ENCODE measurements at regions of chr17 and their contacts with region 1.

Region 1: DNA sequence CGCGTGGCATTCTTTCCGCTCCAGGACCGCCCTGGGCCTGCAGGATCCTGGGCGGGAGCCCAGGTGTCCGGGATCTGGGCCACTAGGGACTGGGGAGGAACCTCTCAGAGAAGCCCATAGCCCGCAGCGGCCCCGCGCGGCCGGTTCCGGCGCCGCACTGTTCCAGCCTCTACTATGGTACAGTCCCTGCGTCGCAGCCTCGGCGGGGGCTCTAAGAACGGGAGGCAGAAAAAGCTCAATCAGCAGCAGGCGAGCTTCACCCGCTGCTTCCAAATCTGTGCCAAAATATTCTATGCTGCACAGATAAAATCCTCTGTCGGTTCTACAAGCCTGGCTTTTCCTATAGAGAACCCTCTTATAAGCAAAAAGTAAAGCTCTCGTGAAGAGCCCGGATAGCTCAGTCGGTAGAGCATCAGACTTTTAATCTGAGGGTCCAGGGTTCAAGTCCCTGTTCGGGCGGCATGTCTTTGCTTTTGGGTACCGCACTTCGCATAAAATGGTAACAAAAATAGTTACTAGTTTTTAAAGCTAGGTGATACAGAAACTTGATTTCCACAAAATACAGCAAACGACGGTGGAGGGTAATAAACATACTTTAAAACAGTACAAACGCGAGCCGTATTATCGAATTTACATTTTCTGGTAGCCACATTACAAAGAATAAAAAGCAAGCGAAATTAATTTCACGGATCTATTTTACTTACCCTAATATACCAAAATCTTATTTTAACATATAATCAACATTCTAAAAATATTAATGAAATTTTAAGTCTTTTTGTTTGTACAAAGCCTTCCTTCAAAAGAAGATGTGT is 661 bp upstream of the ALOXE3 start:
- DNase-seq: peak; percentile 90
- H3K4me3 Mint-ChIP-seq: peak overlapping the region; percentile 83
- H3K27ac Mint-ChIP-seq: peak overlapping the region; percentile 91
- H3K4me1 Mint-ChIP-seq: peaks cover 48% of the 10 kb centered on the region
- H3K27me3 Mint-ChIP-seq: peaks cover 56% of the 10 kb centered on the region

Region 2: GRCh38 chr17:6775871-6776405 is 1343.0 kb before region 1 on chr17 and contains the start of gene FBXO39:
- CTCF ChIA-PET with region 1: no interaction called
- POLR2A ChIA-PET with region 1: no interaction called
- intact Hi-C with region 1: no loop called
- DNase-seq: no peak
- H3K4me3 Mint-ChIP-seq: no peak within 1 kb of the TSS
- H3K27ac Mint-ChIP-seq: no peak within 1 kb of the TSS
- H3K4me1 Mint-ChIP-seq: no peaks in the 10 kb centered on the region
- H3K27me3 Mint-ChIP-seq: peaks cover 20% of the 10 kb centered on the region
- total RNA-seq, gene FBXO39: not detected

Region 3: GRCh38 chr17:7844292-7845154 is 274.5 kb before region 1 on chr17:
- CTCF ChIA-PET with region 1: no interaction called
- POLR2A ChIA-PET with region 1: no interaction called
- intact Hi-C with region 1: loop called (anchors 5 kb)
- DNase-seq: peak; percentile 92
- H3K4me3 Mint-ChIP-seq: peak overlapping the region; percentile 85
- H3K27ac Mint-ChIP-seq: peak overlapping the region; percentile 95
- H3K4me1 Mint-ChIP-seq: peaks cover 45% of the 10 kb centered on the region
- H3K27me3 Mint-ChIP-seq: no peaks in the 10 kb centered on the region

Region 4: GRCh38 chr17:8041249-8041928 is 77.6 kb before region 1 on chr17:
- CTCF ChIA-PET with region 1: no interaction called
- POLR2A ChIA-PET with region 1: no interaction called
- intact Hi-C with region 1: no loop called
- DNase-seq: peak; percentile 62
- H3K4me3 Mint-ChIP-seq: no peak overlapping the region
- H3K27ac Mint-ChIP-seq: no peak overlapping the region
- H3K4me1 Mint-ChIP-seq: no peaks in the 10 kb centered on the region
- H3K27me3 Mint-ChIP-seq: peaks cover 22% of the 10 kb centered on the region

Region 5: GRCh38 chr17:8057691-8058114 is 61.3 kb before region 1 on chr17:
- CTCF ChIA-PET with region 1: interaction called, 120 read pairs
- POLR2A ChIA-PET with region 1: no interaction called
- intact Hi-C with region 1: loop called (anchors 2 kb)
- DNase-seq: peak; percentile 46
- H3K4me3 Mint-ChIP-seq: no peak overlapping the region
- H3K27ac Mint-ChIP-seq: no peak overlapping the region
- H3K4me1 Mint-ChIP-seq: peaks cover 12% of the 10 kb centered on the region
- H3K27me3 Mint-ChIP-seq: peaks cover 42% of the 10 kb centered on the region

Region 6: DNA sequence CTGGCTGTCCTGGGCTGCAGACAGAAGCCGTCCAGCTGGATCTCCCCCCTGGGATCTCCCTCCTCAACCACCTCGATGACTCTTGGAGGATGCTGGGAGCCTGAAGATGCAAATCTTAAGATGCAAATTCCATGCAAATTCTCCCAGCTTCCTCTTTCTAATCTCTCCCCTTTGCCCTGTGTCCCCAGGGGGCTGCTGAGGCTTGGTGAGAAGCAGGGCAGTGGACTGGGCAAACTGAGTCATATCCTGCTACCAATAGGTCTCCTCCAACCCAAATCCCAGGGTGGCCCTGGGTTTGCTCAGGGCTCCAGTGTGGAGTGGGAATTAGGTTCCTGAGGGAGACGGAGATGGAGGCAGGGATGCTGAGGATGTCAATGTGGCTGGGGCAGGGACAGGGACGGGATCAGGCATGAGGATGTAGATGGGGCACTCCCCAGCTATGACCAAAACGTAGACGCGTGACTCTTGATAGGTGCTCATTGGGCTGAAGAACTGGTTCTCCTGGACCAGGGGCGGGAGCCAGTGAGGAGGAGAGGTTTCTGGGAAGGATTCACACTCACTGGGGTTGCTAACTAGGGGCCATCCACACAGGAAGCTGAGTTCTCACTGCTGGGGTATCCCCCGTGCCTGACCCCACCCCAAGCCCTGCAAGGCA is 27.8 kb before region 1 on chr17:
- CTCF ChIA-PET with region 1: interaction called, 92 read pairs
- POLR2A ChIA-PET with region 1: no interaction called
- intact Hi-C with region 1: no loop called
- DNase-seq: no peak
- H3K4me3 Mint-ChIP-seq: no peak overlapping the region
- H3K27ac Mint-ChIP-seq: no peak overlapping the region
- H3K4me1 Mint-ChIP-seq: peaks cover 10% of the 10 kb centered on the region
- H3K27me3 Mint-ChIP-seq: peaks cover 24% of the 10 kb centered on the region

Region 7: DNA sequence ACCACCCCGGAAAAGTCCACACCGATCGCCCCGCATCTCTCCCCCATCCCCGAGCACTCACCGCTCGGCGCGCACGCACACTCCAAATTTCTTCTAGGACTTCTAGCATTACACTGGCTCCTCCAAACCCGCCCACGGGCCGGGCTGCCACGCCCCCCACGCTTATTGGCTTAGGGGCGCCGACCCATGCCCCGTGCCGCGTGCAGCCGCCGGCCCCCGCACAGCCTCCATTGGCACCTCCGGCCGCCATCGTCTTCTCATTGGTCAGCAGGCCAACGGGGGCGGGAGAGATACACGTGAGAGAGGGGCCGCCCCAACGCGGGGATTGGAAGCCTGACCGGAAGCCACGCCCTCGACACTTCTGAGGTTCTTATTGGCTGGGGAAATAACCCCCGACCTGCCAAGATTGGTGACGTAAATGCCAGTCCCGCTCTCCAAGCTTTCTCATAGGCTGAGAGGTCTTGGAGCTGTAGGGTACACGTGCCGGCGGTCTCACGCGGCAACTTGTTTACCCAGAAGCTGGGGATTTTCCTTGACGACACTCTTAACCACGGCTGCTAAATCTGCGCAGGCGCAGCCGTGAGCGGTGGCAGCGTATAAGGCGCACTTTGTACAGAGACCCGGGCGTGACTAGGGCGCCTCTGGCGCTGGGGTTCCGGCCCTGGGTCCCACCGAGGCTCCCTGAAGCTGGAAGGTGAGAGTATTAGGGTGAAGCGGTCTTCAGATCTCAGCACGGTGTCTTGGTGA is 37.4 kb after region 1 on chr17:
- CTCF ChIA-PET with region 1: interaction called, 62 read pairs
- POLR2A ChIA-PET with region 1: interaction called, 7 read pairs
- intact Hi-C with region 1: loop called (anchors 1 kb)
- DNase-seq: peak; percentile 100
- H3K4me3 Mint-ChIP-seq: no peak overlapping the region
- H3K27ac Mint-ChIP-seq: no peak overlapping the region
- H3K4me1 Mint-ChIP-seq: peaks cover 56% of the 10 kb centered on the region
- H3K27me3 Mint-ChIP-seq: no peaks in the 10 kb centered on the region

Region 8: GRCh38 chr17:8222630-8223356 is 103.8 kb after region 1 on chr17:
- CTCF ChIA-PET with region 1: interaction called, 38 read pairs
- POLR2A ChIA-PET with region 1: interaction called, 14 read pairs
- intact Hi-C with region 1: loop called (anchors 1 kb)
- DNase-seq: peak; percentile 94
- H3K4me3 Mint-ChIP-seq: peak overlapping the region; percentile 98
- H3K27ac Mint-ChIP-seq: peak overlapping the region; percentile 98
- H3K4me1 Mint-ChIP-seq: peaks cover 47% of the 10 kb centered on the region
- H3K27me3 Mint-ChIP-seq: peaks cover 14% of the 10 kb centered on the region

Region 9: DNA sequence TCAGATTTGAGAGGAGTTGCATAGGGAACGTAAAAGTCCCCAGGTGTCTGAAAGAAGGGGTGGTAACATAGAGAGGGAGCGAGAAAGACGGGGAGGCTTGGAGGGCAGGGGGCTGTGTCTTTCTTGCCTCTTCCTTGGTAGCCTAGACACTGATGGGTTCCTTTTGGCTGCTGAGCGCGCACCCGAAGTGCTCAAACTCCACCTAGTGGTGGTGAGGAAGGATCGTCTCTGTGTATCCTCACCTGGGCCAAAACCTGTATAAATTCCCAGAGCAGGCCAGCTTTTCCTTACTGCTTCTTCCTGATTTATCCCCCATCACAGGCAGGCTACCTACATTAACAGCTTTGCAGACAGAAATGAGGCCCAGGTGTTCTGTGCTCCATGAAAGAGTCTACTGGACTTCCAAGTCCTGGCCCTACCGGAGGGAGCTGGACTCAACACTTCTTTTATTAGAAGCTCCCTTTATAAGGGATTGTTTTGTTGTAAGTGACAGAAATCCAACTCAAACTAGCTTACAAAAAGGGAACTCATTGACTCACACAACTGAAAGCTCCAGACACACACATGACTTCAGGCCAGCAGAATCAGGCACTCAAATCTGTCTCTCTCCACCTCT is 181.8 kb after region 1 on chr17:
- CTCF ChIA-PET with region 1: interaction called, 13 read pairs
- POLR2A ChIA-PET with region 1: interaction called, 5 read pairs
- intact Hi-C with region 1: loop called (anchors 1 kb)
- DNase-seq: peak; percentile 68
- H3K4me3 Mint-ChIP-seq: no peak overlapping the region
- H3K27ac Mint-ChIP-seq: no peak overlapping the region
- H3K4me1 Mint-ChIP-seq: peaks cover 9% of the 10 kb centered on the region
- H3K27me3 Mint-ChIP-seq: no peaks in the 10 kb centered on the region